A673 (cell line): ENCODE measurements at regions of chr9 and their contacts with region 1.

Region 1: DNA sequence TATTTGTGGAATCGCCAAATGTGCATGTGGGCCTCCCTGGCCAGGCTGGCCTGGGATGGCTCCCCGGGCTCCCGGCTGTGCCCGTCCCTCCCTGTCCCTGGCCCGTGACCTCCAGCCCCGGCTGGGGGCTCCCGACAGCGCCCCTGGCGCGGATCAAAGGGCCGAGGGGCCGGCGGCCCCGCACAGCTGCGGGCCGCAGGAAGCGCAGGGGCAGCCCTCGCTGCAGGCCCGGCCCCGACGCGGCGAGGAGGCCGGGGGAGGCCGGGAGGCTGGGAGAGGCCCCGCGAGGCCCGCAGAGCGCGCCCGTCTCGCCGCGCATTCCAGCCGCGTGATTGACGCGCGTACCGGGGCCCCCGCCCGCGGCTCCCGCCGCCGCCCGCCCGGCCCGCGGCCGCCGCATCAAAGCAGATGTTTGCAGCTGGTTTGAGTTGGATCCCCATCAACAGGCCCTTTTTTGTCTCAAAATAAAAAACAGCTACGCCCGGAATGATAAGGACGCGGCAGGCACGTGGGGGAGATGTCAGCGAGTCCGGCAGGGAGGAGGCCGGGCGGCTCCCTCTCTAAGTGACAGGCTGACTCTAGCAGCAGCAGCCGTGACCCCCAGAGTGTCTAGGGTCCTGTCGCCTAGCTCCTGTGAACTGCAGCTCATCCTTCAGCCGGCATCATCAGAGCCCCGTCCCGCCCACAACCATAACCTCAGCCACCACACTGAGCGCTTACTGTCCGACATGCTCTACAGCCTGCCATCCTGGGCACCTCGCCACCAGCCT is 69.4 kb downstream of the LMX1B start:
- DNase-seq: no peak
- H3K4me3 ChIP-seq: no peak overlapping the region
- H3K27ac ChIP-seq: no peak overlapping the region
- H3K4me1 ChIP-seq: no peaks in the 10 kb centered on the region
- H3K27me3 ChIP-seq: peaks cover 94% of the 10 kb centered on the region
- CTCF ChIP-seq: no peak

Region 2: DNA sequence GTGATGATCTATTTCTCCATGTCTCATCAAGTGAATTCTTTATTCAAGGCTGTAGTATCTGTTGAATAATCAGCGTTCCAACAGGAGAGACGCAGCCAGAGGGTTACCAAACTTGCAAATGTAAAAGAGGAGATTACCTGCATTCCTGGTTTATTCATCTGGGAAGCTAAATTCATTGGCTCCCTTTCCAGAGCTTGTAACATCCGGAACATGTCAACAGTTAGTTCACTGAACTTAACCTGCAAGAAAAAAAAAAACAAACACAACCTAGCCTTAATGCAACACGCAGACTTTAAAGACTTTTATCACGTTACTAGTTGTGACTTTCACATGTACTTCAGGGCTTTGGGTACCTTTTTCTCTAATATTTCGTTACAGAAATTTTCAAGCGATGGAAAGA is 1679.8 kb before region 1 on chr9:
- CTCF ChIA-PET with region 1: interaction called, 10 read pairs
- POLR2A ChIA-PET with region 1: no interaction called
- intact Hi-C with region 1: no loop called
- DNase-seq: no peak
- H3K4me3 ChIP-seq: no peak overlapping the region
- H3K27ac ChIP-seq: no peak overlapping the region
- H3K4me1 ChIP-seq: no peaks in the 10 kb centered on the region
- H3K27me3 ChIP-seq: no peaks in the 10 kb centered on the region
- CTCF ChIP-seq: no peak

Region 3: GRCh38 chr9:126228781-126229444 is 454.2 kb before region 1 on chr9:
- CTCF ChIA-PET with region 1: no interaction called
- POLR2A ChIA-PET with region 1: no interaction called
- intact Hi-C with region 1: no loop called
- DNase-seq: peak; percentile 76
- H3K4me3 ChIP-seq: no peak overlapping the region
- H3K27ac ChIP-seq: no peak overlapping the region
- H3K4me1 ChIP-seq: no peaks in the 10 kb centered on the region
- H3K27me3 ChIP-seq: peaks cover 63% of the 10 kb centered on the region
- CTCF ChIP-seq: peak; percentile 96

Region 4: GRCh38 chr9:126326228-126327005 is 356.7 kb before region 1 on chr9 and contains the start of gene MVB12B:
- CTCF ChIA-PET with region 1: no interaction called
- POLR2A ChIA-PET with region 1: no interaction called
- intact Hi-C with region 1: no loop called
- DNase-seq: peak; percentile 50
- H3K4me3 ChIP-seq: peak within 1 kb of the TSS; percentile 59
- H3K27ac ChIP-seq: peak within 1 kb of the TSS; percentile 85
- H3K4me1 ChIP-seq: peaks cover 6% of the 10 kb centered on the region
- H3K27me3 ChIP-seq: no peaks in the 10 kb centered on the region
- CTCF ChIP-seq: no peak
- total RNA-seq, gene MVB12B: 12.3 and 17.9 TPM in 2 replicates

Region 5: DNA sequence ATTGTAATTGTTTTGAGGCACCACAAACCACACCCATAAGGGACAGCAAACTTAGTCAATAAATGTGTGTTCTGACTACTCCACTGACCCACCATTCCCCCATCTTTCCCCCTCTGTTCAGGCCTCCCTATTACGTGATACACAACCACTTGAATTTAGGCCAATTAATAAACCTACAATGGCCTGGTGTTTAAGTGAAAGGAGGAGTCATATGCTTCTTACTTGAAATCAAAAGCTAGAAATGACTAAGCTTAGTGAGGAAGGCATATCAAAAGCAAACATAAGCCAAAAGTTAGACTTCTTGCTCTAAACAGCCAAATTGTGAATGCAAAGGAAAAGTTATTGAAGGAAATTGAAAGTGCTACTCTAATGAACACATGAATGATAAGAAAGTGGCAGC is 136.4 kb after region 1 on chr9:
- CTCF ChIA-PET with region 1: no interaction called
- POLR2A ChIA-PET with region 1: no interaction called
- intact Hi-C with region 1: no loop called
- DNase-seq: no peak
- H3K4me3 ChIP-seq: no peak overlapping the region
- H3K27ac ChIP-seq: no peak overlapping the region
- H3K4me1 ChIP-seq: no peaks in the 10 kb centered on the region
- H3K27me3 ChIP-seq: no peaks in the 10 kb centered on the region
- CTCF ChIP-seq: no peak